BJ (cell line): ENCODE measurements at regions of chr10 and their contacts with region 1.

Region 1: DNA sequence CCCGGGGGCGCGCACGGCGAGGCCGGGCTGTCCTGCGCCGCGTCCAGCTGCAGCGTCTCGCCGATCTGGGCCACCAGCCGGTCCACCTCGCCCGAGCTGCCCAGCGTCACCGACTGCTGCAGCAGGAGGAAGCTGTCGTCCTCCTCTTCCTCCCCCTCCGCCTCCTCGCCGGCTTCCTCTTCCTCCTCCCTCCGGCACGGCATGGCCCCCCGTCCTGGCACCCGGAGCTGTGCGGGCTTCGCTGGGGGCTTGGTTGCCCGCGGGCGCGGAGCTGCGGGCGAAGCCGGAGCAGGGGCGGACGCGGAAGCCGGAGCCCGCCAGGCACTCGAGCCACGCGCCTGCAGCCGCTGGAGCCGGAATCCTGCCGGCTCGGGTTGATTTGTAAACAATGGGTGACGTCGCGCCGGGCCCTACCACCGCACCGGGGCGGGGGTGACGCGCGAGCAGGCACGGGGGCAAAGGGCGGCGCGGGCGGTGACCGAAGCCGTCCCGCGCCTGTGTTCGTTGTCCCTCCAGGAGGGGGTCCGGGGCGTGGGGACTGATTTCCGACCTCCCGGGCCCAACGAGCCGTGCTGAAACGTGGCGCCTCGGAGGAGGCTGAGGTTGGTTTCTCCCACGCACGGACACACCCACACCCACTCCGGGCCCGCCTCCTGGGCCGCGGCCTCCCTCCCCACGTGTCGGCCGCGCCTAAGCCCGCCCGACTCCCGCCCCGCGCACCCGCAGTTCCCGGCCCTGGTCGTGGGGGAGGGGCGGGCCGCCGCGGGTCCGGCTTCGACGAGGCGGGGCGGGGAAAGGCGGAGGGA is at the start of gene FRAT2:
- DNase-seq: no peak
- H3K4me3 ChIP-seq: peak within 1 kb of the TSS; percentile 76
- H3K27me3 ChIP-seq: peaks cover 10% of the 10 kb centered on the region
- CTCF ChIP-seq: no peak
- polyA plus RNA-seq, gene FRAT2: 1.8 and 2.9 TPM in 2 replicates

Region 2: DNA sequence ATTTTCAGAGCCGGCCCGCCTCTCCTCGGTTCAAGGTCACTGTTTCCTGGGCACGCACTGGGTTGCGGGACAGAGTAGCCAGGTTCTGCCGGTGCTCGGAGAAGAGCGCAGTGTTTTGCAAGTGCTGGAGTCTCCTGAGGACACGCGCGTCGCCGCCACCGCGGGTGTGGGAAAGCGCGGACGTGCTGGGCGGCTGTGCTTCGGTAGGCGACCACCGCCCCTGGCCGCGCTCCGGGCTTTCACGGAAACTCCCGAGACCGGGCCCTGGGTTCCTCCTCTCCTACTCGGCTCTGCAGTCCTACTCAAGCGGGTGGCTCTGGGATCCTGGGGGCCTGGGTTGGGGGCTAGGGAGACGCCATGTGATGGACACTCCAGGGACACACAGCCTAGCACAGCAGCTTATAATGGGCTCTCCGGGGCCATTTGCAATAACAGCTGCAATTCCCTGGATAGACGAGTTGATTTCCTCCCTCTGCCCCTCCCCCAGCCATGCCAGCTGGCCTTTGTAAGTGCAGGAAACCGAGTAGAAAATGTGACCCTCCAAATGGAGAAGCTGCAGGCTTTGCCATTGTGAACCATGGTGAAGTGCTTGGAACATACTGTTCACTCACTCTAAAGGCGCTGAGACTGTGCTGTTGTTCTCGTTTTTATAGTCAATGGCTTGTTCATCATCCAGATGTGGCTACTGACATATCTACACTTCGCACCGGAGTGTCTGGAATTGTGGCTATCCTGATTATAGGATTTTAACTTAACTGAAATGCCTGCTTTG is 13.4 kb before region 1 on chr10:
- CTCF ChIA-PET with region 1: interaction called, 17 read pairs
- POLR2A ChIA-PET with region 1: no interaction called
- DNase-seq: no peak
- H3K4me3 ChIP-seq: no peak overlapping the region; the same call in 1 of the 2 replicates
- H3K27me3 ChIP-seq: no peaks in the 10 kb centered on the region
- CTCF ChIP-seq: no peak